Natural killer cell (primary cell): ENCODE measurements at regions of chr6 and their contacts with region 1.

Region 1: GRCh38 chr6:125153391-125154117 is at the start of gene TPD52L1:
- DNase-seq: peak; percentile 40 to 69
- ATAC-seq: peak; percentile 81 to 95 (median 89)
- H3K4me3 ChIP-seq: peak within 1 kb of the TSS; percentile 37
- H3K4me3 Mint-ChIP-seq: peak within 1 kb of the TSS; percentile 86
- H3K27ac ChIP-seq: no peak within 1 kb of the TSS
- H3K27ac Mint-ChIP-seq: peak within 1 kb of the TSS in 1 of 2 donors; percentile 31
- H3K4me1 ChIP-seq: peaks cover 15% of the 10 kb centered on the region
- H3K4me1 Mint-ChIP-seq: peaks cover 5 to 16% of the 10 kb centered on the region in 2 donors
- H3K27me3 ChIP-seq: peaks cover 14% of the 10 kb centered on the region
- H3K27me3 Mint-ChIP-seq: peaks cover 20 to 44% of the 10 kb centered on the region in 2 donors
- CTCF ChIP-seq: peak; percentile 70
- total RNA-seq, gene TPD52L1: 1.2 TPM in 2 of 3 donors, not detected in the other

Region 2: DNA sequence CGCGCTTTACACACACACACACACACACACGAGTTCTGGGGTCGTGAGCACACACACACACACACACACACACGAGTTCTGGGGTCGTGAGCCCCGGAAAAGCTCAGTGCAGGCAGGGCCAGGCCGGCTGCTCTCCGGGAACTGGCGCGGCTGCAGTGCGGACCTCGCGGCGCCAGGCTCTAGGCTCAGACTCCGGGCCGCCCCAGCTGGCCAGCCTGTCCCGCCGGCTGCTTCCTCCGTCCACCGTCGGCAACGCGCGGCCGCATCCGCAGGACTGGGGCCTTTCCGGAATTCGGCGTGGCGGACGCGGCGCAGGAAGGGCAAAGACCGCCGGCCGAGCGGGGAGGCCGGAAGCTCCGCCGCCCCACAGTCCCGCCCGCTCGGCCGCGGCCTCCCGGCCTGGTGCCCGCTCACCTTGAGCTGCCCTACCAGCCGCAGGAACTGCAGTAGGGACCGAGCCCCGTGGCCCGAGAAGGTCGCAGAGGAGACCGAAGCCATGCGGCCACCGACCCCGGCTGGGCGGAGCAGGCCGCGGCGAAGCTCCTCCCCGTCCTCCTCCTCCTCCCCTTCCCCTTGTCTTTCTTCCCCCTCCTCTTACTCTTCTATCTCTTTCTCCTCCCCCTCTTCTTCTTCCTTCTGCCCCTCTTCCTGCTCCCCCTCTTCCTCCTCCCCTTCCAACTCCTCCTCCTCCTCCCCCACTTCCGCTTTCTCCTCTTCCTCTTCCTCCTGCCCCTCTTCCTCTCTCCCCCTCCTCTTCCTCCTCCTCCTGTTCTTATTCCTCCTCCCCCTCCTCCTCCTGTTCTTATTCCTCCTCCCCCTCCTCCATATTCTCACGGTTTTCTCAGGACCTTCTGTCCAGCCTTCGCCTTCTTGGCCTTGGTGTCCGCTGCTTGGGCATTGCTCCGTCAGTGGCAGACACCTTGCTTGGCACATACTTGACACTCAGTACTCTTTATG is 148.2 kb after region 1 on chr6 and contains the start of gene HDDC2:
- intact Hi-C with region 1: loop called (anchors 10 kb)
- DNase-seq: peak; percentile 53 to 63
- ATAC-seq: peak; percentile 52 to 79 (median 64)
- H3K4me3 ChIP-seq: peak within 1 kb of the TSS; percentile 70
- H3K4me3 Mint-ChIP-seq: peak within 1 kb of the TSS; percentile 94
- H3K27ac ChIP-seq: peak within 1 kb of the TSS; percentile 89
- H3K27ac Mint-ChIP-seq: peak within 1 kb of the TSS; percentile 82 to 89
- H3K4me1 ChIP-seq: peaks cover 13% of the 10 kb centered on the region
- H3K4me1 Mint-ChIP-seq: peaks cover 52 to 61% of the 10 kb centered on the region in 2 donors
- H3K27me3 ChIP-seq: no peaks in the 10 kb centered on the region
- H3K27me3 Mint-ChIP-seq: peaks cover 2 to 22% of the 10 kb centered on the region in 2 donors
- CTCF ChIP-seq: no peak
- total RNA-seq, gene HDDC2: 53.5 to 87.5 (median 57.3) TPM

Region 3: GRCh38 chr6:125363039-125363823 is 209.7 kb after region 1 on chr6:
- intact Hi-C with region 1: no loop called
- DNase-seq: no peak
- ATAC-seq: no peak
- H3K4me3 ChIP-seq: no peak overlapping the region
- H3K4me3 Mint-ChIP-seq: no peak overlapping the region
- H3K27ac ChIP-seq: no peak overlapping the region
- H3K27ac Mint-ChIP-seq: no peak overlapping the region
- H3K4me1 ChIP-seq: peaks cover 9% of the 10 kb centered on the region
- H3K4me1 Mint-ChIP-seq: peaks cover 0 to 4% of the 10 kb centered on the region in 2 donors
- H3K27me3 ChIP-seq: peaks cover 19% of the 10 kb centered on the region
- H3K27me3 Mint-ChIP-seq: peaks cover 52 to 64% of the 10 kb centered on the region in 2 donors
- CTCF ChIP-seq: no peak

Region 4: GRCh38 chr6:125512621-125513020 is 359.1 kb after region 1 on chr6:
- intact Hi-C with region 1: no loop called
- DNase-seq: peak in 1 of 2 donors; percentile 10
- ATAC-seq: no peak
- H3K4me3 ChIP-seq: no peak overlapping the region
- H3K4me3 Mint-ChIP-seq: no peak overlapping the region
- H3K27ac ChIP-seq: no peak overlapping the region
- H3K27ac Mint-ChIP-seq: no peak overlapping the region
- H3K4me1 ChIP-seq: no peaks in the 10 kb centered on the region
- H3K4me1 Mint-ChIP-seq: no peaks in the 10 kb centered on the region
- H3K27me3 ChIP-seq: peaks cover 2% of the 10 kb centered on the region
- H3K27me3 Mint-ChIP-seq: peaks cover 8 to 12% of the 10 kb centered on the region in 2 donors
- CTCF ChIP-seq: no peak

Region 5: DNA sequence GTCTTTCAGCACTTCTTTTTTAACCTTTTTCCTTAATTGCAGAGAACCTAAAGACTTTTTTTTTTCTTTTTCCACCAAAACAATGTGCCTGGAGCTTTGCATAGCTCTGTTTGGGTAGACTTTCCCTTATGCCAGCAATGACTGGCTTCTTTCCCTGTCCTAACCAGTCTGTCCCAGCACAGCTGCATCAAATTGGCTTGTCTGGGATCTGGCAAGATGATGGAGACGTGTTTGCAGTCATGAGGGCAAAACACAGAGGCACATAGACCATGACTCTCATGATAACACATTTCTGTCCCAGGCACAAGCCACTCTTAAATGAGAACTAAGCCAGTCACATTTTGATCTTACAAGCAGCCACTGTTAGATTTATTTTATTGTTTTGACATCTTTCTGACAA is 612.4 kb after region 1 on chr6:
- intact Hi-C with region 1: loop called (anchors 5 kb)
- DNase-seq: no peak
- ATAC-seq: no peak
- H3K4me3 ChIP-seq: no peak overlapping the region
- H3K4me3 Mint-ChIP-seq: no peak overlapping the region
- H3K27ac ChIP-seq: no peak overlapping the region
- H3K27ac Mint-ChIP-seq: no peak overlapping the region
- H3K4me1 ChIP-seq: no peaks in the 10 kb centered on the region
- H3K4me1 Mint-ChIP-seq: no peaks in the 10 kb centered on the region
- H3K27me3 ChIP-seq: peaks cover 9% of the 10 kb centered on the region
- H3K27me3 Mint-ChIP-seq: peaks cover 29 to 65% of the 10 kb centered on the region in 2 donors
- CTCF ChIP-seq: no peak